ENCODE measurements at regions of chr18 and their contacts with region 1.

Region 1: GRCh38 chr18:54983041-54983686 is 23.9 kb upstream of the CCDC68 start:
- DNase-seq: peak; percentile 64
- H3K4me3 Mint-ChIP-seq: no peak overlapping the region
- H3K27ac Mint-ChIP-seq: no peak overlapping the region
- H3K4me1 Mint-ChIP-seq: no peaks in the 10 kb centered on the region
- H3K27me3 Mint-ChIP-seq: peaks cover 8% of the 10 kb centered on the region

Region 2: DNA sequence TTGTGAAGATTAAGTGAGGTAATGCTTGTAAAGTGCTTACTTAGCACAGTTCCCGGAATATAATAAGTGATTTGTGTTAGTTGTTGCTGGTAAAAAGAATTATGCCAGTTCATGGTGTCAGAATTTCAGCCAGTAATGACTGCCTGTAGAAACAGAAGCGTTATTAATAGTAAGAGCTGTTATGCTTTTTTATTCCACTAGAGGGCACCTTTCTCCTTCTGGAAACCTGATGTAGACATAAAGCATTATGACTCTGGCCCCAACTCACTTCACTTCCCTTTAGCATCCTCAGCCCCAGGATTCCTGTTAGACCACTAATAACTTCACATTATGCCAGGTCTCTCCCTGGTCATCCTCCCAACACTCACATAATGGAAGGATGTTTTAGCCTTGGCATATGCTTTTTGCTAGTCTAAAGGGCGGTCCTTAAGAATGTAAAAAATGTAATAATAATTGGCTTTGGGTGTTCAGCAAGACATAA is 590.6 kb before region 1 on chr18:
- intact Hi-C with region 1: loop called (anchors 2 kb)
- DNase-seq: peak; percentile 70
- H3K4me3 Mint-ChIP-seq: no peak overlapping the region
- H3K27ac Mint-ChIP-seq: no peak overlapping the region
- H3K4me1 Mint-ChIP-seq: peaks cover 27% of the 10 kb centered on the region
- H3K27me3 Mint-ChIP-seq: peaks cover 18% of the 10 kb centered on the region

Region 3: GRCh38 chr18:54444319-54444914 is 538.7 kb before region 1 on chr18:
- intact Hi-C with region 1: loop called (anchors 1 kb)
- DNase-seq: peak; percentile 76
- H3K4me3 Mint-ChIP-seq: no peak overlapping the region
- H3K27ac Mint-ChIP-seq: no peak overlapping the region
- H3K4me1 Mint-ChIP-seq: no peaks in the 10 kb centered on the region
- H3K27me3 Mint-ChIP-seq: peaks cover 16% of the 10 kb centered on the region

Region 4: DNA sequence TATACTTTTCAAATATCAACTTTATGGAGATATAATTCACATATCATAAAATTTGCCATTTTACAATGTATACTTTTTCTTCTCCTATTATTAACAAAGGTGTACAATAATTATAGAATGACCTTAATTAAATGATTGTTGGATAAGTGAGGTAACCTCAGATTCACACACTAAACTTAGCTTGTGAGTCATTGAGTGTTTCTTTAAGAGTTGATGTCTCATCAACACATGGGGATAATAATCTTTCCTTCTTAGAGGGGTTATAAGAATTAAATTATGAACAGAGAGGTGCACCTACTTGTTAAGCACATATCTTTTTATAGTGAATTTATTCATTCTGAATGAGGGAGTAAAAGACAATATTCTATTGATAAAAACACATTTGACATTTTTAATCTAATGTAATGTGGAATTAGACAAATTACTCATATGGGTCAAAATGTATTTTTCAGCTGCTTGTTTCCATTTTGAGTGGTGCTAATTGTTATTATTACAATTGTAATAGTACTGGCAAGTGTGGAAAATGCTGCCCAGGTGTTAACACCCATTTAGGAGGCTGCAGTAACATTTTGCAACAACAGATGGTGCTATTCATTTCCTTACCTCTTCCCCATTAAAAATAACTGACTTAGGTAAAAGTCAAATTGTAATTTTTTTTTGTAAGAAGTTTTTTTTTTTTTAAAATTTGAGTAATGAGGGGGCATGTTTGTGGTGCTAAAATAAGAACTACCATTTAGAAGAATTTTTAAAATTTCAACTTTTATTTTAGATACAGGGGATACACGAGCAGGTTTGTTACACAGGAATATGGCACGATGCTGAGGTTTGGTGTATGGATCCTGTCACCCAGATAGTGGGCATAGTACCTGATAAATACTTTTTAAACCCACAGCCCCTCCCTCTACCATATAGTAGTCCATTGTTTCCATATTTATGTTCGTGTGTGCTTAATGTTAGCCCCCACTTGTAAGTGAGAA is 424.3 kb before region 1 on chr18:
- intact Hi-C with region 1: loop called (anchors 2 kb)
- DNase-seq: peak; percentile 66
- H3K4me3 Mint-ChIP-seq: no peak overlapping the region
- H3K27ac Mint-ChIP-seq: no peak overlapping the region
- H3K4me1 Mint-ChIP-seq: no peaks in the 10 kb centered on the region
- H3K27me3 Mint-ChIP-seq: peaks cover 5% of the 10 kb centered on the region

Region 5: GRCh38 chr18:54679318-54680149 is 303.6 kb before region 1 on chr18:
- intact Hi-C with region 1: loop called (anchors 1 kb)
- DNase-seq: peak; percentile 73
- H3K4me3 Mint-ChIP-seq: no peak overlapping the region
- H3K27ac Mint-ChIP-seq: no peak overlapping the region
- H3K4me1 Mint-ChIP-seq: peaks cover 4% of the 10 kb centered on the region
- H3K27me3 Mint-ChIP-seq: peaks cover 27% of the 10 kb centered on the region

Measured in activated CD4-positive, alpha-beta T cell treated with anti-CD3 and anti-CD28 coated beads, Interleukin-2, amount 10 ng/mL, durations not matched to agents 24 days and 14 days (primary cell).